ENCODE measurements at regions of chr22 and their contacts with region 1.

Region 1: DNA sequence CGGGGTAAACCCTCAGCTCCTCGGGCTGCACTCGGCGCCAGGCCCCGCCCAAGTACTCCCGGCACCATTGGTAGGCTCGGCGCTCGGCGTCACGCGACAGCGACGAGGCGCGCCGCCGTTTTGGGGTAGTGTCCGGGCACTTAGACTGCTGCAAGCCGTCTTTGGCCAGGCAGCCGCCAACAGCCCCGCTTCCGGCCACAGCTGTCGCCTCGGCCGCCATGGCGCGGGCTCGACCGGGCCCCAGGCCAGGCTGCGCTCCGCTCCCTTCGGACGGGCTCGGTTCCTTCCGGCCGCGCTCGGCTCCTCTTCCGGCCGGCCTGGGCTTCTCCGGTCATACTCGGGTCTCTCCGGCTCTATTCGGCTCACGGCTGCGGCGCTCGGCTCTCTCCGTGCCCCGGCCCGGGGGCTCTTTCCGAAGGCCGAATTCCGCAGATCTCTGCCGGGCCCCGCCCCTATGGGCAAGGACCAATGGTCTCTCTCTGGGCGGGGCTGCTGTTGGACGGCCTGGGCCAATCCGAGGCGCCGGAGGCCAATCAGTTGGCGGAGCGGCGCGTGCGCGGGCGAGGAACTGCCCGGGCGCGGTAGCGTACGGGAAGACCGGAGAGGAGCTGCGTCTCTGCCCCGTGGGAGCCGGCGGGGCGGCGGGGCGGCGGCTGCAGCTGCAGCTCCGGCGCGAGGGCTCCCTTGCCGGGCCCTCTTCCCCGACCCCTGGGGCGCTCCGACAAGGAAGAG is at the start of gene CHKB:
- DNase-seq: peak; percentile 98 to 99 (median 98)
- H3K4me3 ChIP-seq: peak within 1 kb of the TSS; percentile 63 to 91
- H3K4me3 Mint-ChIP-seq: peak within 1 kb of the TSS; percentile 90 to 96 (median 93)
- H3K27ac ChIP-seq: peak within 1 kb of the TSS; percentile 97
- H3K27ac Mint-ChIP-seq: peak within 1 kb of the TSS; percentile 91 to 98 (median 96)
- H3K4me1 ChIP-seq: peaks cover 21% of the 10 kb centered on the region
- H3K4me1 Mint-ChIP-seq: peaks cover 8 to 39% (median 16%) of the 10 kb centered on the region in 4 donors
- H3K27me3 ChIP-seq: no peaks in the 10 kb centered on the region
- H3K27me3 Mint-ChIP-seq: no peaks in the 10 kb centered on the region
- total RNA-seq, gene CHKB: 178 to 196 TPM

Region 2: GRCh38 chr22:49462795-49463194 is 1119.9 kb before region 1 on chr22:
- CTCF ChIA-PET with region 1: no interaction called
- POLR2A ChIA-PET with region 1: no interaction called
- intact Hi-C with region 1: no loop called
- DNase-seq: no peak
- H3K4me3 ChIP-seq: no peak overlapping the region
- H3K4me3 Mint-ChIP-seq: no peak overlapping the region
- H3K27ac ChIP-seq: no peak overlapping the region
- H3K27ac Mint-ChIP-seq: no peak overlapping the region
- H3K4me1 ChIP-seq: no peaks in the 10 kb centered on the region
- H3K4me1 Mint-ChIP-seq: peaks cover 0 to 2% (median 0%) of the 10 kb centered on the region in 4 donors
- H3K27me3 ChIP-seq: no peaks in the 10 kb centered on the region
- H3K27me3 Mint-ChIP-seq: peaks cover 0 to 6% of the 10 kb centered on the region in 2 donors

Region 3: DNA sequence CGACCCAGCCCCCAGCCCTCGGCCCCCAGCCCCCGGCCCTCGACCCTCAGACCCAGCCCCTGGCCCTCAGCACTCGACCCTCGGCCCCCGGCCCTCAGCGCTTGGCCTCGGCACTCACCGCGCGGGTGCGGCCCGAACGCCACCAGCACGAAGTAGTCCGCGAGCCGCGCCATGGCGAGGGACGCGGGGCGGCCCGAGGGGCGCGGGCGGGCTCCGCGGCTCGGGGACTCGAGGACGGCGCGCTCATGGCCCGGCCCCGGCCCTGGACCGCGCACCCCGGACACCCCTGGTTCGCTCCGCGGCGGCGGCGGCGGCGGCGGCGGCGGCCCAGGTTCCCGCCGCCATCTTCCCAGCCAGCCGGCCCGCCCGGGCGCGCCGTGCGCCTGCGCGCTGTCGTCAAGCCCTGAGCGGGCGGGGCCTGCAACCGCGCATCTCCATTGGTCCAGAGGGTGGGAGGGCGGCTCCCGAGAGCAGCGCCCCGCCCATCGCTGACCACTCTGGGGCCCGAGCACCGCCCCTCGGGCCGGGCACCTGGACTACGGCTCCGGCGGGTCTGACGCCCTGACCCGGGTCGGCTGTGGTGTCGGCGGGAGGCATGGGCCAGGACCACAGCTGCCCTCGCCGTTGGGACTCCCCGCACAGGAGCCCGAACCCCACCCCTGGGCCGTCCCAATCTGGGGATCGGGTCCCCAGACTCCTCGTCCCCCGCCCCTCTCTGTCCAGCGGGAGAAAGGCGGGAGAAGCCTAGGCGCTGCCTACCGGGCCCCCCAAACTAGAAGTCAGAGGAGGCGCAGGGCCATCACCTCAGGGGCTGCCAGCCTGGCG is 107.8 kb before region 1 on chr22 and contains the start of gene SBF1:
- CTCF ChIA-PET with region 1: no interaction called
- POLR2A ChIA-PET with region 1: interaction called, 6 read pairs
- intact Hi-C with region 1: loop called (anchors 5 kb)
- DNase-seq: peak; percentile 83 to 88 (median 84)
- H3K4me3 ChIP-seq: peak within 1 kb of the TSS; percentile 73 to 79
- H3K4me3 Mint-ChIP-seq: peak within 1 kb of the TSS; percentile 88 to 99 (median 95)
- H3K27ac ChIP-seq: peak within 1 kb of the TSS; percentile 75
- H3K27ac Mint-ChIP-seq: peak within 1 kb of the TSS; percentile 89 to 98 (median 94)
- H3K4me1 ChIP-seq: peaks cover 47% of the 10 kb centered on the region
- H3K4me1 Mint-ChIP-seq: peaks cover 28 to 62% (median 40%) of the 10 kb centered on the region in 4 donors
- H3K27me3 ChIP-seq: no peaks in the 10 kb centered on the region
- H3K27me3 Mint-ChIP-seq: no peaks in the 10 kb centered on the region
- total RNA-seq, gene SBF1: 217 to 221 TPM

Region 4: DNA sequence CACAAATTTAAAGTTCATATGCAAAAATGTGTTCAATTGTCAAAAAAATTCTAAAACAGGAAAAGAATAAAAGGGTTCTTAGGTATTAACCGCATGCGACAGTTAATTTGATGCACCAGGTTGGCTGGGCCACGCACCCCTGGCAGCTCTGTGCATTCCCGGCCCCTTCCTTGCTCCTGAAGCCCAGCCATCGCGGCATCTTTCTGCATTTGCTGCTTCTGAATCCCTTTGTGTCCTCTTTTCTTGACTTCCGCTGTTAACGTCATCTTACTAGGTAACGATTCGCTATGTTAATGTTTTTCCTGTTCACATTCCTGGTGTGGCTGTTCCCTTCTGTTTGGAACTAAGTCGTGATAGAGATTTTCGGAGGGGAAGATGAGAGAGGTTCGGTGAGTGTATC is 45.0 kb before region 1 on chr22:
- CTCF ChIA-PET with region 1: no interaction called
- POLR2A ChIA-PET with region 1: interaction called, 25 read pairs
- intact Hi-C with region 1: no loop called
- DNase-seq: no peak
- H3K4me3 ChIP-seq: no peak overlapping the region
- H3K4me3 Mint-ChIP-seq: peak overlapping the region in 6 of 8 donors; percentile 49 to 70 (median 60)
- H3K27ac ChIP-seq: peak overlapping the region; percentile 99
- H3K27ac Mint-ChIP-seq: peak overlapping the region; percentile 86 to 100 (median 96)
- H3K4me1 ChIP-seq: peaks cover 41% of the 10 kb centered on the region
- H3K4me1 Mint-ChIP-seq: peaks cover 25 to 61% (median 49%) of the 10 kb centered on the region in 4 donors
- H3K27me3 ChIP-seq: no peaks in the 10 kb centered on the region
- H3K27me3 Mint-ChIP-seq: no peaks in the 10 kb centered on the region

Region 5: DNA sequence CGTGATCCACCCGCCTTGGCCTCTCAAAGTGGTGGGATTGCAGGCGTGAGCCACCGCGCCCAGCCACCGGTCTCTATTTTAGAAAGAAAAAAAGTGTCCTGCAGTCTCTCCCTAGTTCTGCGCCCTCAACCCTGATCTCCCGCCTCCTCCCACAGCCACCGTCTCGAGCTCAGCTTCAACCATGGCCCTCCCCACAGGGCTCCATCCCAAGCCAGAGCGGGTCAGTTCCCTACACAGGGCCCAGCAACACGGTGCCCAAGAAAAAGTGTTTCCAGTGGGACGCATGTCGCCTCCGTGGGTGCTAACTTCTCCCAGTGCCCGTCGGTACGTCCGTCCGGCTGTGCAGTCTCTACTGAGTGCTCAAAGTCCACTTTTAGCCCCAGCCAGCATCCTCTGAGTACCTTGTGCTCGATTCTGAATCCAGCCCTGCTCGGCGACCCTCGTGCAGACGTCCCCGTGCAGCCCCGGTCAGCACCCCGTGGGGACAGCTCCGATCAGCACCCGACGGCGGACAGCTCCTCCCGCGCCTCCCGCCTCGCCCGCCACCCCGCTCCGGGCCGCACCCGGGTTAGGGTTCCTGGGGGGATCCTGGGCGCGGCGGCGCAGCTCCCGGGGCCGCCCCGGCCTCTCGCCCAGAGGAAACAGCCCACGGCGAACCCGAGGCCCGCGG is 17.2 kb after region 1 on chr22:
- CTCF ChIA-PET with region 1: no interaction called
- POLR2A ChIA-PET with region 1: no interaction called
- intact Hi-C with region 1: no loop called
- DNase-seq: peak; percentile 62 to 71 (median 64)
- H3K4me3 ChIP-seq: no peak overlapping the region
- H3K4me3 Mint-ChIP-seq: peak overlapping the region; percentile 25 to 82 (median 63)
- H3K27ac ChIP-seq: no peak overlapping the region
- H3K27ac Mint-ChIP-seq: peak overlapping the region in 2 of 7 donors; percentile 6 to 46
- H3K4me1 ChIP-seq: no peaks in the 10 kb centered on the region
- H3K4me1 Mint-ChIP-seq: peaks cover 8 to 14% (median 11%) of the 10 kb centered on the region in 4 donors
- H3K27me3 ChIP-seq: peaks cover 7% of the 10 kb centered on the region
- H3K27me3 Mint-ChIP-seq: peaks cover 21 to 25% of the 10 kb centered on the region in 2 donors

Region 6: DNA sequence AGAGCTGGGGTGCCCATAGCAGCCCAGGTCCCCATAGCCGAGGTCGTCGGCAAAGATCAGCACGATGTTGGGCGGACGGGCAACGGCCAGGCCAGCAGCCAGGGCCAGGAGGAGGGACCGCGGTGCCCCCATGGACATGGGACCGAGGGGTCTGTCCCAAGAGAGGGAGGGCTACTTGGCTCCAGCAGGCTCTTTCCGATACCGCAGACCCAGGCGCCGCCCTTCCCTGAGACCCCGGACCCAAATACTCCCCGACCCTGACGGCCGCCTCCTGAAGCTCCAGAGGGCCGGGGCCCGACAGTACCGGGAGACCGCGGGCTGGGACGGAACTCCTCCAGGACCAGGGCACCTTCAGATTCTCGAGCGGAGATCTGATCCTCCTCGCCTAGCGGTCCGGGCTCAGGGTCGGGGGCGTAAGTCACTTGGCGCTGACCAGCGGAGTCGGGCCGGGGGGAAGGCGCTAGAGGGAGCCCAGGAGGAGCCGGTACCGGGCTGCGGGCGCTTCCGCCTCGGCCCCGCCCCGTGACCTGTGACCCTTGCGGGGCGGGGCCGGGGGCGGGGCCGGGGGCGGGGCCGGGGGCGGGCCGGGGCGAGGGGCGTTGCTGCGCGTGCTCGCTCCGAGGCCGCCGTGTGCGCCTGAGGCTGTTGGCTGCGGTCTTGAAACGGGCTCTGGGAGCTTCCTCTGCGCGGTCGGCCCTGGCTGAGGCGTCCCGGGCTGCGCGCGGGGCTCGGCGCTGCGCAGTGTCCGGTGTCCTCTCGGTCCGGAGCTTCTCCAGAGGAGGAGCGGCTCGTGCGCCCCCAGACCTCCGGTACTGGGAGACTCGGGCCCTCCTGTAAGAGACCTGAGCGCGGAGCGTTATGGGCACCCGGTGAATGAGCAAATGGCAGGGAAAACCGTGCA is 45.2 kb after region 1 on chr22 and contains the start of gene ARSA:
- CTCF ChIA-PET with region 1: no interaction called
- POLR2A ChIA-PET with region 1: no interaction called
- intact Hi-C with region 1: loop called (anchors 2 kb)
- DNase-seq: peak; percentile 81 to 84 (median 81)
- H3K4me3 ChIP-seq: peak within 1 kb of the TSS; percentile 57 to 90
- H3K4me3 Mint-ChIP-seq: peak within 1 kb of the TSS; percentile 83 to 95 (median 90)
- H3K27ac ChIP-seq: peak within 1 kb of the TSS; percentile 84
- H3K27ac Mint-ChIP-seq: peak within 1 kb of the TSS; percentile 88 to 97 (median 91)
- H3K4me1 ChIP-seq: peaks cover 29% of the 10 kb centered on the region
- H3K4me1 Mint-ChIP-seq: peaks cover 10 to 28% (median 18%) of the 10 kb centered on the region in 4 donors
- H3K27me3 ChIP-seq: no peaks in the 10 kb centered on the region
- H3K27me3 Mint-ChIP-seq: no peaks in the 10 kb centered on the region
- total RNA-seq, gene ARSA: 83.2 to 86.8 TPM

Region 7: GRCh38 chr22:50641696-50642607 is 59.2 kb after region 1 on chr22:
- CTCF ChIA-PET with region 1: no interaction called
- POLR2A ChIA-PET with region 1: no interaction called
- intact Hi-C with region 1: no loop called
- DNase-seq: no peak
- H3K4me3 ChIP-seq: no peak overlapping the region
- H3K4me3 Mint-ChIP-seq: no peak overlapping the region
- H3K27ac ChIP-seq: no peak overlapping the region
- H3K27ac Mint-ChIP-seq: no peak overlapping the region
- H3K4me1 ChIP-seq: no peaks in the 10 kb centered on the region
- H3K4me1 Mint-ChIP-seq: no peaks in the 10 kb centered on the region
- H3K27me3 ChIP-seq: peaks cover 17% of the 10 kb centered on the region
- H3K27me3 Mint-ChIP-seq: peaks cover 8 to 11% of the 10 kb centered on the region in 2 donors